Right cardiac atrium (tissue), 5 donors: ENCODE measurements at regions of chr15 and their contacts with region 1.

Region 1: DNA sequence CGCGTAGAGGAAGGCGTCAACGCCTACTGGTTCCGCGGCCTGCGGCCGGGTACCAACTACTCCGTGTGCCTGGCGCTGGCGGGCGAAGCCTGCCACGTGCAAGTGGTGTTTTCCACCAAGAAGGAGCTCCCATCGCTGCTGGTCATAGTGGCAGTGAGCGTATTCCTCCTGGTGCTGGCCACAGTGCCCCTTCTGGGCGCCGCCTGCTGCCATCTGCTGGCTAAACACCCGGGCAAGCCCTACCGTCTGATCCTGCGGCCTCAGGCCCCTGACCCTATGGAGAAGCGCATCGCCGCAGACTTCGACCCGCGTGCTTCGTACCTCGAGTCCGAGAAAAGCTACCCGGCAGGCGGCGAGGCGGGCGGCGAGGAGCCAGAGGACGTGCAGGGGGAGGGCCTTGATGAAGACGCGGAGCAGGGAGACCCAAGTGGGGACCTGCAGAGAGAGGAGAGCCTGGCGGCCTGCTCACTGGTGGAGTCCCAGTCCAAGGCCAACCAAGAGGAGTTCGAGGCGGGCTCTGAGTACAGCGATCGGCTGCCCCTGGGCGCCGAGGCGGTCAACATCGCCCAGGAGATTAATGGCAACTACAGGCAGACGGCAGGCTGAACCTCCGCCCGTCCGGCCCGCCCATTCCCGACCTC is 4.1 kb downstream of the ISLR2 start:
- DNase-seq: peak; percentile 53 to 81 (median 79)
- ATAC-seq: peak; percentile 22 to 28
- H3K4me3 ChIP-seq: no peak overlapping the region
- H3K27ac ChIP-seq: no peak overlapping the region
- H3K4me1 ChIP-seq: peaks cover 5% of the 10 kb centered on the region
- H3K27me3 ChIP-seq: no peaks in the 10 kb centered on the region

Region 2: DNA sequence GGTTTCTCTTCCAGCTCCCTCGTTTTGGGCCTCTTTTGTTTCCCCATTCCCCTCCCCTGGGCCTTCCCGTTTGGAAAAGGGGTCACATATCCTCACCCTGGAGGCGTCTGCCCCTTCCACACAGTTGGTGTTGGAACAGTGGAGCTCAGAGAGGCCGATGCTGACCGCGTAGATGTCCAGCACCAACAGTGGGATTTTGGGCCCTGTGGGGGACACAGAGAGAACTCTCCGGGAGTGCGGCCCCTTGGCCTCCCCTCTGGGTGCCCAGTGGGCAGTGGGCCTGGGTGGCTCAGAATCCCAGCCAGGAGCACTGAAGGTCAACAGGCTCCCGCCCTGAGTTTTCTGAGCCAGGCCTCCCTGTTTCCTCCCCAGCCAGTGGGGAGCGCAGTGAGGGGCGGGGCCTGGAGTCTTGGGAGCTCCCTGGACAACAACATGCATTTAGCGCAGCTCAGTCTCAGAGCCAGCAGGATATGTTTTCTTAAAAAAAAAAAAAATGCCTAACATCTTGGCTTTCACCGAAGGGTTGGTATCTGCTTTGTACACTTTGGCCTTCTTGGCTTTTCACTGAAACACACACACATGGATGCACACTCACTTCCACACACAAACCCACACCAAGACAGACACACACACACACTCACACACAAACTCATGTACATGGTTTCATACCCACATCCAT is 38.3 kb after region 1 on chr15:
- intact Hi-C with region 1: loop called in 1 of 4 experiments (anchors 5 kb)
- DNase-seq: peak; percentile 83 to 95 (median 94)
- ATAC-seq: peak; percentile 86 to 87
- H3K4me3 ChIP-seq: no peak overlapping the region
- H3K27ac ChIP-seq: peak overlapping the region; percentile 89
- H3K4me1 ChIP-seq: peaks cover 21% of the 10 kb centered on the region
- H3K27me3 ChIP-seq: no peaks in the 10 kb centered on the region

Region 3: GRCh38 chr15:74202452-74203428 is 68.2 kb after region 1 on chr15 and contains the start of gene STRA6:
- intact Hi-C with region 1: no loop called
- DNase-seq: peak in 1 of 3 donors; percentile 55
- ATAC-seq: no peak
- H3K4me3 ChIP-seq: no peak within 1 kb of the TSS
- H3K27ac ChIP-seq: no peak within 1 kb of the TSS
- H3K4me1 ChIP-seq: peaks cover 14% of the 10 kb centered on the region
- H3K27me3 ChIP-seq: no peaks in the 10 kb centered on the region
- total RNA-seq, gene STRA6: 0.20 to 0.58 (median 0.37) TPM

Region 4: DNA sequence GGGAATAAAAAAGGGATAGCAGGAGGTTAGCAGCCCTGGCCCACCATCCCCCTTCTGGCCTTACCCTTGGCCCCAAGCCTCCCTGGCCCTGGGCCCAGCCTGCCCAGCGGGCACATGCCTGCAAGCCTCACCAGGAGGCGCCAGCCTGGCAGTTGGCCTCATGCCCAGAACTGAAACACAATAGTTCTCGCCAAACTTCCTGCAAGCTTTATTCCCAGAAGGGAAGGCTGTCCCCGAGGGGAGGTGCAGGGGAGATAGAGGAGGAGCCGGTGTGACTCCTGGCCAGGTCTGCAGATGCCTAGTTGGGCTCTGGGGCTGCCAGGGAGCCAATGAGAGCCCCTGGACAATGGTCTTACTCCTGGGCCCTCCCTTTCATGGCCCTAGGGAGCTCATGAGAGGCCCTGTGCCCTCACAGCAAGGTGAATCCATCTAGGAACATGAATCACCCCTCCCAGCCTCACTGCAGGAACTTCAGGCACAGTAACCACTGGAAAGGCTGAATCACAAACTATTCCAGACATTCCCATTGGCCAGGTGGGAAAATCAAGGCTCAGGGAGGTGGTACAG is 105.6 kb after region 1 on chr15:
- intact Hi-C with region 1: loop called in 1 of 4 experiments (anchors 10 kb)
- DNase-seq: peak; percentile 85 to 94 (median 93)
- ATAC-seq: peak; percentile 83 to 84
- H3K4me3 ChIP-seq: no peak overlapping the region
- H3K27ac ChIP-seq: peak overlapping the region; percentile 75
- H3K4me1 ChIP-seq: peaks cover 19% of the 10 kb centered on the region
- H3K27me3 ChIP-seq: no peaks in the 10 kb centered on the region